ENCODE measurements at regions of chr4 and their contacts with region 1.

Region 1: GRCh38 chr4:54658252-54659093 is 716 bp downstream of the KIT start:
- DNase-seq: peak; percentile 63
- ATAC-seq: peak; percentile 74
- H3K4me3 Mint-ChIP-seq: peak overlapping the region; percentile 80
- H3K27ac Mint-ChIP-seq: peak overlapping the region; percentile 28
- H3K4me1 Mint-ChIP-seq: peaks cover 25% of the 10 kb centered on the region
- H3K27me3 Mint-ChIP-seq: peaks cover 68% of the 10 kb centered on the region

Region 2: GRCh38 chr4:54683616-54684346 is 25.3 kb after region 1 on chr4:
- CTCF ChIA-PET with region 1: interaction called, 12 read pairs
- POLR2A ChIA-PET with region 1: no interaction called
- DNase-seq: peak; percentile 74
- ATAC-seq: peak; percentile 76
- H3K4me3 Mint-ChIP-seq: peak overlapping the region; percentile 62
- H3K27ac Mint-ChIP-seq: peak overlapping the region; percentile 93
- H3K4me1 Mint-ChIP-seq: peaks cover 46% of the 10 kb centered on the region
- H3K27me3 Mint-ChIP-seq: no peaks in the 10 kb centered on the region